ENCODE measurements at regions of chr6 and their contacts with region 1.

Region 1: DNA sequence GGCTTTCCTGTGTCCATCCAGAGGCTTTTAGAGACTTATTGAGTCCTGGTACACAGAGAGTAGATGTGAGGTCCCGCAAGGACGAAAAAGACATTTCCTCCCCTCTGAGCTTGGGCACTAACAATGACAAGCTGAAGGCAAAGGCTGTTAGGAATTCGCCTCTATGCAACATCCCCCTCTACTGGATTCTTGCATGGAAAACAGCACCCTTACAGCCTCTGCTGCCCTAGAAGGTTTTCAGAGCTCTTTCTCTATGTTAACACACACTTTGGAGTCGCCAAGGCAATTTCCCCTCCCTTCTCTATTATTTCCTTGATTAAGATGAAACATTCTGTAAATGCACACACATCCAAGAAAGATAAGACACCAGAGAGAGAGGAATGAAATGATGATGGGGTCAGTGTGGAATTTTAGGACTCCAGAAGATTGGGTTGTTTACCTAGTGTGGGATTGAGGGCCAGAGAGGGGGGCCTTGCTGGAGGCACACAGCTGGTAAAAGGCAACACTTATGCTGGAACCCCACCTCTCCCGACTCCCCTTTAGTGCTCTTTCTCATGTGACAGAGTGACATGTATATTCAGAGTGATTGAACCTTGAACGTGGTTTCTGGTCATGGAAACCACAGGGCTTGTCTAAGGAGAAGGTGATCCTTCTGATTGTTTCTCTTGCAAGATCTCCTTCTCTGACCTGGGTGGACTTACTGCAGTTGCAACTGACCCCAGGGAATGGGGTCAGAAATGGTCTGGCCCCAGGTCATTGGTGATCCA is 300.7 kb downstream of the CLIC5 start:
- DNase-seq: peak; percentile 62 to 74 (median 68)
- H3K4me3 ChIP-seq: no peak overlapping the region
- H3K4me3 Mint-ChIP-seq: peak overlapping the region; percentile 62 to 78 (median 66)
- H3K27ac ChIP-seq: no peak overlapping the region
- H3K27ac Mint-ChIP-seq: peak overlapping the region in 3 of 7 donors; percentile 3 to 70 (median 58)
- H3K4me1 ChIP-seq: peaks cover 21% of the 10 kb centered on the region
- H3K4me1 Mint-ChIP-seq: peaks cover 19 to 29% (median 23%) of the 10 kb centered on the region in 4 donors
- H3K27me3 ChIP-seq: no peaks in the 10 kb centered on the region
- H3K27me3 Mint-ChIP-seq: peaks cover 0 to 2% of the 10 kb centered on the region in 2 donors

Region 2: DNA sequence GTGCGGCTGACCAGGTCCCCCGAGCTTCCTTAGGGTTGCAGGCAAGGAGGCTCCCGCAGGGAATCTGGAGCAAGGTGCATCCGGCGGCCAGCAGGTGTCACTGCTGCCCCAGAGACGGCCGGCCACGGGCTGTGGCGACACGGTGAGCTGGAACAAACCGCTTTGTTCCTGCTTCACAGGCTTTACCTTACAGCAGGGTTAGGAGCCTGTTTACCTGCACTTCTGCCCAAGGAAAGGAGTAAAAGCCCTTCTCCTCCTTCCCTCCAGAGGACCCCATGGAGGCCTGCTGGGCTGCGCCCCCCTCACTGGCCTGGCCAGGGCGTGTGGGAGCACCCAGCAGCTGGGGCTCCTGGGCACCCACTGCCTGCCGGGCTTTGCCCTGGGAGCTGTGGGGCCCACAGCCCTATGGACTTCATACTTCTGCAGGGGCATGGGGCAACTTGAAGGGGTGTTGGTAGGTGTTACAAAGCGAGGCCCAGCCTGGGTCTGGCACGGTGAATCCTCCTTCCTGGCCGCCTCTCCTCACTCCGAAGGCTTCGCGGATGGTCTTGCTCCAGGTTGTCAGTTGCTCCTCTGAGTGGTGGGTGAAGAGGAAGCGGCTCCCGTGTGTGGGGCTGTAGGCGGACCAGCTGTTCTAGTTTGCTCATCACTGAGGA is 1239.0 kb before region 1 on chr6:
- CTCF ChIA-PET with region 1: interaction called, 30 read pairs
- POLR2A ChIA-PET with region 1: no interaction called
- intact Hi-C with region 1: no loop called
- DNase-seq: peak; percentile 47 to 66 (median 63)
- H3K4me3 ChIP-seq: no peak overlapping the region
- H3K4me3 Mint-ChIP-seq: no peak overlapping the region
- H3K27ac ChIP-seq: no peak overlapping the region
- H3K27ac Mint-ChIP-seq: no peak overlapping the region
- H3K4me1 ChIP-seq: peaks cover 6% of the 10 kb centered on the region
- H3K4me1 Mint-ChIP-seq: peaks cover 0 to 5% (median 2%) of the 10 kb centered on the region in 4 donors
- H3K27me3 ChIP-seq: no peaks in the 10 kb centered on the region
- H3K27me3 Mint-ChIP-seq: peaks cover 2 to 3% of the 10 kb centered on the region in 2 donors

Region 3: DNA sequence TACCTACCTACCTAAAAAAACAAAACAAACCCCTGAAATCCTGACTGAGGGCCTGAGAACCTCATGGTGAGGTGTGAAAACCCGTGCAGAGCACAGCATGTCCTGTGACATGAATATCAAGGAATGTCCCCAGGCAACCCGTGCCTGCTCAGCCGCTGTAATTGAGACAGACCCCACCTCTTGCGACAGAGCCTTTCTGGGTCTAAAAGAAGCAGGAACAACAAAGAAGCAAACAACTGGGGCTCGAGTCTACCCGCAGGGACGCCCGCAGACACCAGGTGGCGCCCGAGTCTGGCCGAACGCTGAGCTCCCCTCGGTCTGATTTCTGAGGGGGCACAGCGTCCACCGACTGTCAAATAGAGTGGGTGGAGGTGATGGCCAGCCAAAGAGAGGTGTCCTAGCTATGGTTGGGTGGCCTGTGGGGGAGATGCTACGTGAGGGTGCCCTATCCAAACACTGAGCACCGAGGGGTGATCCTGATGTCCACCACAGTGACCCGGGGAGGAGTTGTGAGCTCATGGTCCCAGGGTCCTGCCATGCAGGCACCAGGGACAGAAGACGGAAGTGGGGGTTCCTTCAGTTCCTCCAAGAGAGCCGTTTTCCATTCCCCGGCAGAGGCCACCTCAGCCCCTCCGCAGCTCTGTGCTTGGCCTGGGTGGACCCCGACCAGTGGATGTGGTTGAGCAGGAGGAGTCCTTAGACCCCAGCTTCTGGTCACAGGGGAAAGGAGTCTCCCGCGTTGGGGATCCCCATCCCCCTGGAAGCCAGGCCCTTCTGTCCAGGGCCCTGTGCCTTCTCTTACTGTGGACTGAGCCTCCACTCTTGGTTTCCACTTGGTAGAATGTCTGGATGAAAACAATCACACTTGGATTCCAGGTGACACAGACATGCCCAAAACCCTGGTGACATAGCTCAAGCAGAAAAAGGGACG is 1059.2 kb before region 1 on chr6:
- CTCF ChIA-PET with region 1: interaction called, 182 read pairs
- POLR2A ChIA-PET with region 1: interaction called, 15 read pairs
- intact Hi-C with region 1: loop called (anchors 1 kb)
- DNase-seq: peak; percentile 61 to 68 (median 62)
- H3K4me3 ChIP-seq: no peak overlapping the region
- H3K4me3 Mint-ChIP-seq: peak overlapping the region in 7 of 8 donors; percentile 34 to 76 (median 61)
- H3K27ac ChIP-seq: peak overlapping the region; percentile 6
- H3K27ac Mint-ChIP-seq: peak overlapping the region; percentile 30 to 94 (median 85)
- H3K4me1 ChIP-seq: peaks cover 8% of the 10 kb centered on the region
- H3K4me1 Mint-ChIP-seq: peaks cover 5 to 12% (median 6%) of the 10 kb centered on the region in 4 donors
- H3K27me3 ChIP-seq: no peaks in the 10 kb centered on the region
- H3K27me3 Mint-ChIP-seq: peaks cover 0 to 3% of the 10 kb centered on the region in 2 donors

Region 4: GRCh38 chr6:45297320-45297719 is 417.6 kb before region 1 on chr6:
- CTCF ChIA-PET with region 1: interaction called, 6 read pairs
- POLR2A ChIA-PET with region 1: no interaction called
- intact Hi-C with region 1: loop called (anchors 1 kb)
- DNase-seq: no peak
- H3K4me3 ChIP-seq: no peak overlapping the region
- H3K4me3 Mint-ChIP-seq: no peak overlapping the region
- H3K27ac ChIP-seq: no peak overlapping the region
- H3K27ac Mint-ChIP-seq: peak overlapping the region in 1 of 7 donors; percentile 25
- H3K4me1 ChIP-seq: peaks cover 21% of the 10 kb centered on the region
- H3K4me1 Mint-ChIP-seq: peaks cover 21 to 31% (median 29%) of the 10 kb centered on the region in 4 donors
- H3K27me3 ChIP-seq: no peaks in the 10 kb centered on the region
- H3K27me3 Mint-ChIP-seq: no peaks in the 10 kb centered on the region

Region 5: DNA sequence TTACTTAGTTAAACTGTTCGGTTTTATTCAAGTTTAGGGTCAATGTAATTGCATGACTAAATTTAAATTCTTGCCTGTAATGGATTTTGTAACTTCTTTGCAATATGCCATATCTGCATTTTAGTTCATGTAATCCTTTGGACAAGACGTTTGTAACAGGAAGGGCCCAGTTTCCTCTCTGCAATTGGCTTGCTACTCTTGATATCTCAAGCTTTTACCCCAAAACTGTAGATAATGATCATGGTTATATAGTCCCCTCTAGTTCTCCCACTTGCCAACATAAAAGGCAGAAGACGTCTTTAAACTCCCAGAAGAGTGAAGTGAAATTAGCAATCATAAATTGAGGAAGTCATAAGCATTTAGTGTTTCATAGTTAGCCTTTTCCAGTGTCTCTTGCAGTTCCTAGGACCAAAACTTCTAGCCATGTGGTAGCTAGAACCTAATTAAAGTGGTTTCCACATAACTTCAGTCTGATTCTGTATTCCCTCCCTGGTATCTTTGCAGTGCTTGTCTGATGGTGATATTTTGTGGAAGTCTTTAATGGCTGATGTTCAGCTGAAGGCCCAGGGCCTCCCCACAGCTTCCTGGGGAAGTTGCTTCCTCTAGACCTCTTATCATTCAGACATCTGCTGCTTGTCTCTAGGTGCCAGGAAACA is 219.4 kb before region 1 on chr6:
- CTCF ChIA-PET with region 1: interaction called, 11 read pairs
- POLR2A ChIA-PET with region 1: interaction called, 6 read pairs
- intact Hi-C with region 1: no loop called
- DNase-seq: peak; percentile 47 to 69 (median 55)
- H3K4me3 ChIP-seq: no peak overlapping the region
- H3K4me3 Mint-ChIP-seq: peak overlapping the region in 7 of 8 donors; percentile 56 to 86 (median 72)
- H3K27ac ChIP-seq: no peak overlapping the region
- H3K27ac Mint-ChIP-seq: peak overlapping the region; percentile 53 to 93 (median 81)
- H3K4me1 ChIP-seq: peaks cover 46% of the 10 kb centered on the region
- H3K4me1 Mint-ChIP-seq: peaks cover 43 to 68% (median 59%) of the 10 kb centered on the region in 4 donors
- H3K27me3 ChIP-seq: no peaks in the 10 kb centered on the region
- H3K27me3 Mint-ChIP-seq: no peaks in the 10 kb centered on the region

Region 6: DNA sequence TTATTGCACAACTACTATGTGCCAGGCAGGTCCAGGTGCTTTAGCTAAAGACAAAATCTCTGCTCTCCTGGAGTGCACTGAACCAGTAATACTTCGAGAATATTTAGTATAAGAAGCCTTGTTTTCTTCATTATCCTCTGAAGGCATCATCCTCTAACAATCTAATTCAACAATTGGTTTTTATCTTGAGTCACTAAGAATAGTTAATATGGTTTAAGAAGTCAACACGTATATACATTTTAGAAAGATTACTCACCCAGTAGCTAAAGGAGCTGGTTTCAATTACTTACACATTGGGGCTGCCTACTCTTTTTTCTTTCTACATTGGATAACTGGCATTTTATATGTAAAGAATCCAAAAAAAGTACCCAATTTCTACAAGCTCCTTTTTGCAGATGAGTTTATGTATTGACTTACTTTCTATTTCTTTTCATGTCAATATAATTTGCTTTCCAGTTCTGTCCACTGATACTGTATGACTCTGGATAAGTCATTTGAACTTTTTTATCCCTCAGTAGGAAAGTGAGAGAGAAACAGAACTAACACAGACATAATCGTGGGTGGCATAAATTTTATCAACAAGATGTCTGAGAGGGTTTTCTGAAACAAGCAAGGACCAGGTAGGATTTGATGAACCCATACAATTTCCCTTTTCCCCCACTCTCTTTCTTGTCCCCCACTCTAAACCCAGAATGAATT is 11.7 kb before region 1 on chr6:
- CTCF ChIA-PET with region 1: interaction called, 11 read pairs
- POLR2A ChIA-PET with region 1: interaction called, 4 read pairs
- intact Hi-C with region 1: no loop called
- DNase-seq: no peak
- H3K4me3 ChIP-seq: no peak overlapping the region
- H3K4me3 Mint-ChIP-seq: no peak overlapping the region
- H3K27ac ChIP-seq: no peak overlapping the region
- H3K27ac Mint-ChIP-seq: no peak overlapping the region
- H3K4me1 ChIP-seq: no peaks in the 10 kb centered on the region
- H3K4me1 Mint-ChIP-seq: no peaks in the 10 kb centered on the region
- H3K27me3 ChIP-seq: no peaks in the 10 kb centered on the region
- H3K27me3 Mint-ChIP-seq: no peaks in the 10 kb centered on the region

Measured in CD4-positive, alpha-beta memory T cell (primary cell).